ENCODE measurements at regions of chr14 and their contacts with region 1.

Region 1: GRCh38 chr14:75497191-75497590 is 25.1 kb upstream of the BATF start:
- DNase-seq: no peak
- ATAC-seq: peak; percentile 71
- H3K4me3 Mint-ChIP-seq: peak overlapping the region; percentile 46
- H3K27ac Mint-ChIP-seq: peak overlapping the region; percentile 77
- H3K4me1 Mint-ChIP-seq: peaks cover 65% of the 10 kb centered on the region
- H3K27me3 Mint-ChIP-seq: no peaks in the 10 kb centered on the region
- CTCF ChIP-seq: no peak

Region 2: DNA sequence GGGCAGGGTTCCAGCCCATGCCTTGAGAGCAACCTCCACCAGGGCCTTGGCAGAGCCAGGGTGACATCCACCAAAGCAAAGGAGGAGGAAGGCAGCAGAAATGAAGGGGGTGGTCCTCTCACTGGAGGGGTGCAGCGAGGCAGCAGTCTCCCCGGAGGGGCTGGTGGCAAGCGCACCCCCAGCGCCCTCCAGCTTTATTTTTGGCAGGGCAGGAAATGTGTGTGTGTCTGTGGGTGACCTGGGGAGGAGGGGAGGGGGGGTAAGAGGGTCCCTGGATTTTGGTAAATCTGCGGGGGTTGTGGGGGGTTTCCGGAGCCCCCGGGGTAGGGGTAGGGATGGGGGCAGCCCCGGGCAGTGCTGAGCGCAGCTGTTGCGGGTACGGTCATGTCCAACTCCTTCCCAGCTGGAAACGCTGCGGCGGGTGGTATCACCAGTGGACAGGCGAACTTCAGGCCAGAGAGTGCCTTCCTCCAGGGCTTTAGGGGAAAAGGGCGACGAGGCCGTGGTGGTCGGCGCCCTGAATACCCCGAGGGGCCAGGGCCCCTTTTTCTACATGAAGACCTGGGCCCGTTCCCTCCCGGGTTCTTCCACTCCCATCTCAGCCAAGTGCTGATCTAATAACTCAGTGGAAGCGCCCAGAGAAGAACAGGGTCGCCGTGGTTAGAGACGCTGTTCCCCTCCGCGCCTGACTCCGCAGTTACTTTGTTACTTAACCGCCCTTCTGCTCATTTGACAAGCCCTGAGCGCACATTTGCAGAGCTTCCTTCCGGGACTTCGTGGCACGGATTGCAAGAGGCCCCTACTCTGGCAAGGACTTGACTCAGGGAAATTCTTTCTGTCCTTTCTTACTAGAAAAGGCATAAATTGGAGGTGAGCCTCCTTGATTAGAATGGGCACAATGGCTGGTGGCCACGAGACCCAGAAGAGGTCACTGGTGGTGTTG is 163.3 kb before region 1 on chr14:
- CTCF ChIA-PET with region 1: no interaction called
- POLR2A ChIA-PET with region 1: interaction called, 11 read pairs
- intact Hi-C with region 1: no loop called
- DNase-seq: peak; percentile 32
- ATAC-seq: peak; percentile 80
- H3K4me3 Mint-ChIP-seq: peak overlapping the region; percentile 84
- H3K27ac Mint-ChIP-seq: peak overlapping the region; percentile 81
- H3K4me1 Mint-ChIP-seq: peaks cover 27% of the 10 kb centered on the region
- H3K27me3 Mint-ChIP-seq: peaks cover 4% of the 10 kb centered on the region
- CTCF ChIP-seq: no peak

Region 3: DNA sequence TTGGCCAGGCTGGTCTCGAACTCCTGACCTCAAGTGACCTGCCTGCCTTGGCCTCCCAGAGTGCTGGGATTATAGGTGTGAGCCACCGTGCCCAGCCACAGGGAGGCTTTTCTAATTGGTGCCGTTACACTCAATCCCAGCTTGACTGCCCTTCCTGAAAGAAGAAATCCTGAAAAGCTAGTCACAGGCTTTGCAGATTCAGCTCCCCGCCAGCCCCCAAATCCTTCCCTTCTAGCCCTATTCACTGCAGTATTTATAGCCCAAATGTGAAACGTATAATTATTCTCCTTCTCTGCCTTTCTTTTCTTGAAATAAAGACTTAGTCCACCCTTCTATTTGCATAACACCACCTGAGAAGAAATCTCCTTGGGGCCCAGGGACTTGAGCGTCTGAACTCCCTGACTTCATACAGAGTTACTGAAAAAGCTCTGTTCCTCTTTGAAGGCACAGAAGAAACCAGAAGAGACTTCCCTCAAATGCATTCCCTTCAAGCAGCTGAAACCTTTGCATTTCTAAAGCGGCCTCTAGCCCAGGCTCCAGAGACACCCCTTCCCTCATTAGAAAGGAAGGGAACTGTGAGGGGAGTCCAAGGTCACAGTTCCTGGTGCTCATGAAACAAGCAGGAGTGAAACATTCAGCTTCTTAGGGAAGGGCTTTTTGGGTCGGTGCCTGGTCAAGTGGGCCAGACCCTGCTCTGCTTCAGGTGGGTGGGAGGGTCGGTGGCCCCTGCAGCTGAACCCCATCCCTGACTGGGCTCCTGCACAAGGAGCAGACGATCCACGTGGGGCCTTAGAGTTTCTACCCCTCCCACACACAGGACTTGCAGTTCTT is 17.2 kb before region 1 on chr14:
- CTCF ChIA-PET with region 1: interaction called, 4 read pairs
- POLR2A ChIA-PET with region 1: interaction called, 15 read pairs
- intact Hi-C with region 1: no loop called
- DNase-seq: no peak
- ATAC-seq: peak; percentile 77
- H3K4me3 Mint-ChIP-seq: peak overlapping the region; percentile 32
- H3K27ac Mint-ChIP-seq: peak overlapping the region; percentile 66
- H3K4me1 Mint-ChIP-seq: peaks cover 19% of the 10 kb centered on the region
- H3K27me3 Mint-ChIP-seq: no peaks in the 10 kb centered on the region
- CTCF ChIP-seq: no peak

Region 4: DNA sequence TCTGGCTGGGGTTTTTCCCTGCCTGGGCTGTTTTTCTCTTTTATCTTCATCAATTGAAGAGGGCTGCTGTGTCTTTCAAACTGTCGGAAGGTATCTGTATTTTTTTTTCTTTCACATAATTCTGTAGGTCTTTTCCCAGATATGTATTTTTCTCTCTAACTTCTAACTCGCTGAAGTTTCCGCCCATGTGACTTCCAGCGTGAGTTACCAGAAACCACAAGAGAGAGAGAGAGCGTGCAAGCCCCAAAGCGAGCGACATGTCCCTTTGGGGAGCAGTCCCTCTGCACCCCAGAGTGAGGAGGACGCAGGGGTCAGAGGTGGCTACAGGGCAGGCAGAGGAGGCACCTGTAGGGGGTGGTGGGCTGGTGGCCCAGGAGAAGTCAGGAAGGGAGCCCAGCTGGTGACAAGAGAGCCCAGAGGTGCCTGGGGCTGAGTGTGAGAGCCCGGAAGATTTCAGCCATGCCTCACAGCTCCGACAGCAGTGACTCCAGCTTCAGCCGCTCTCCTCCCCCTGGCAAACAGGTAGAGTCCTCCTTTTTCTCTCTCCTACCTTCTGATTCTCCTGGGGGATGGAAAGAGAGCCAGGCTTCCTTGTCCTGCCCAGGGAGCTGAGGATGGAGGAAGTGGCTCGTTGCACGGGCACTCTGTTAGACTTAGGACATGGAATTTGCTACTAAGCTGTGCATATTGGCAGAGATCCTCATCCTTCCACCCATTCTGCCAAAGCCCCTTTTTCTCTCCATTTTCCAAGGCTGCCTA is 25.2 kb after region 1 on chr14 and contains the start of gene BATF:
- CTCF ChIA-PET with region 1: interaction called, 4 read pairs
- POLR2A ChIA-PET with region 1: interaction called, 132 read pairs
- intact Hi-C with region 1: no loop called
- DNase-seq: peak; percentile 58
- ATAC-seq: peak; percentile 70
- H3K4me3 Mint-ChIP-seq: peak within 1 kb of the TSS; percentile 100
- H3K27ac Mint-ChIP-seq: peak within 1 kb of the TSS; percentile 98
- H3K4me1 Mint-ChIP-seq: peaks cover 85% of the 10 kb centered on the region
- H3K27me3 Mint-ChIP-seq: no peaks in the 10 kb centered on the region
- CTCF ChIP-seq: no peak
- total RNA-seq, gene BATF: 160 and 171 TPM in 2 replicates